ENCODE measurements at regions of chr15 and their contacts with region 1.

Region 1: GRCh38 chr15:29348336-29348914 is 78.8 kb upstream of the NSMCE3 start:
- DNase-seq: peak; percentile 89
- H3K4me3 ChIP-seq: no peak overlapping the region
- H3K27ac ChIP-seq: peak overlapping the region in 3 of 4 donors; percentile 67 to 68 (median 68)
- H3K4me1 ChIP-seq: peaks cover 0 to 37% (median 30%) of the 10 kb centered on the region in 4 donors
- H3K27me3 ChIP-seq: no peaks in the 10 kb centered on the region
- CTCF ChIP-seq: no peak
- EP300 ChIP-seq: peak in 2 of 4 donors; percentile 7 to 58
- POLR2A ChIP-seq: no peak

Region 2: GRCh38 chr15:29269485-29270168 is 78.8 kb before region 1 on chr15 and contains the start of gene NSMCE3:
- intact Hi-C with region 1: loop called (anchors 2 kb)
- DNase-seq: peak; percentile 96
- H3K4me3 ChIP-seq: peak within 1 kb of the TSS; percentile 71 to 92 (median 76)
- H3K27ac ChIP-seq: peak within 1 kb of the TSS; percentile 88 to 94 (median 92)
- H3K4me1 ChIP-seq: peaks cover 0 to 34% (median 22%) of the 10 kb centered on the region in 4 donors
- H3K27me3 ChIP-seq: no peaks in the 10 kb centered on the region
- CTCF ChIP-seq: no peak
- EP300 ChIP-seq: peak in 1 of 4 donors; percentile 55
- POLR2A ChIP-seq: peak; percentile 90 to 93
- total RNA-seq, gene NSMCE3: 7.8 to 12.8 (median 10.3) TPM

Region 3: GRCh38 chr15:29364429-29365078 is 16.1 kb after region 1 on chr15:
- intact Hi-C with region 1: loop called (anchors 1 kb)
- DNase-seq: no peak
- H3K4me3 ChIP-seq: no peak overlapping the region
- H3K27ac ChIP-seq: peak overlapping the region in 3 of 4 donors; percentile 16 to 49 (median 27)
- H3K4me1 ChIP-seq: peaks cover 0 to 12% (median 3%) of the 10 kb centered on the region in 4 donors
- H3K27me3 ChIP-seq: no peaks in the 10 kb centered on the region
- CTCF ChIP-seq: peak; percentile 31 to 59 (median 52)
- EP300 ChIP-seq: no peak
- POLR2A ChIP-seq: no peak

Region 4: GRCh38 chr15:29398907-29399306 is 50.5 kb after region 1 on chr15:
- intact Hi-C with region 1: loop called (anchors 5 kb)
- DNase-seq: no peak
- H3K4me3 ChIP-seq: no peak overlapping the region
- H3K27ac ChIP-seq: no peak overlapping the region
- H3K4me1 ChIP-seq: peaks cover 0 to 53% (median 30%) of the 10 kb centered on the region in 4 donors
- H3K27me3 ChIP-seq: no peaks in the 10 kb centered on the region
- CTCF ChIP-seq: no peak
- EP300 ChIP-seq: no peak
- POLR2A ChIP-seq: no peak

Region 5: GRCh38 chr15:29480278-29480677 is 131.9 kb after region 1 on chr15:
- intact Hi-C with region 1: loop called (anchors 10 kb)
- DNase-seq: no peak
- H3K4me3 ChIP-seq: no peak overlapping the region
- H3K27ac ChIP-seq: no peak overlapping the region
- H3K4me1 ChIP-seq: peaks cover 0 to 8% (median 7%) of the 10 kb centered on the region in 4 donors
- H3K27me3 ChIP-seq: no peaks in the 10 kb centered on the region
- CTCF ChIP-seq: no peak
- EP300 ChIP-seq: no peak
- POLR2A ChIP-seq: no peak

Region 6: DNA sequence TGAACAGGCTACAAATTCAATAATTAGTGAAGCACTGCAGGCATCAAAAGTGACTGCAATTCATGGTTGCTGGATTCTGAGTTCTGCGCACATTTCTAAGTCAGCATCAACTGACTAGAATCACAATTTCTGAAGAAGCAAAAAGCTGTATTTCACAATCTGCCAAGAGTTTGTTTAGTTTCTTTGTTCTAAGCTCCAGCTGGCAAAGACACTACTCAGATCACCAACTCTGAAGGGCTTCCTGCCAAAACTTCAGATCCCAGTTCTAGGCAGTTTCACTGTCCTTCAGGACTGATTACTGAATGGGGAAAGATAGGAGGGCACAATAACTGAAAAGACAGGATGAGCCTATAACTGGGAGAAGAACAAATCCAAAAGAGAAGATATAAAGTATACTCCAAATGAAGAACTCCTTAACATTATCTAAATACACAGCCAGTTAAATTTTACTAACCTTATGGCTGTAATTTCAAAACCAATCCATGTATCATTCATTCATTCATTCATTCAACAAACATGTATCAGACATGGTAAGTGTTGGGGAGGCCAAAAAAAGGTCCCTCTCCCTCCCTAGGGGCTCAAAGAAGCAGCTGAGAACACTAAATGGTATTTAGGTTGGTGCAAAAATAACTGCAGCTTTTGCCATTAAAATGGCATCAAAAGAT is 456.8 kb after region 1 on chr15:
- intact Hi-C with region 1: loop called (anchors 10 kb)
- DNase-seq: no peak
- H3K4me3 ChIP-seq: no peak overlapping the region
- H3K27ac ChIP-seq: peak overlapping the region in 3 of 4 donors; percentile 11 to 69 (median 44)
- H3K4me1 ChIP-seq: peaks cover 0 to 76% (median 62%) of the 10 kb centered on the region in 4 donors
- H3K27me3 ChIP-seq: no peaks in the 10 kb centered on the region
- CTCF ChIP-seq: no peak
- EP300 ChIP-seq: no peak
- POLR2A ChIP-seq: no peak

Measured in sigmoid colon (tissue), 7 donors.